ENCODE measurements at regions of chr1 and their contacts with region 1.

Region 1: DNA sequence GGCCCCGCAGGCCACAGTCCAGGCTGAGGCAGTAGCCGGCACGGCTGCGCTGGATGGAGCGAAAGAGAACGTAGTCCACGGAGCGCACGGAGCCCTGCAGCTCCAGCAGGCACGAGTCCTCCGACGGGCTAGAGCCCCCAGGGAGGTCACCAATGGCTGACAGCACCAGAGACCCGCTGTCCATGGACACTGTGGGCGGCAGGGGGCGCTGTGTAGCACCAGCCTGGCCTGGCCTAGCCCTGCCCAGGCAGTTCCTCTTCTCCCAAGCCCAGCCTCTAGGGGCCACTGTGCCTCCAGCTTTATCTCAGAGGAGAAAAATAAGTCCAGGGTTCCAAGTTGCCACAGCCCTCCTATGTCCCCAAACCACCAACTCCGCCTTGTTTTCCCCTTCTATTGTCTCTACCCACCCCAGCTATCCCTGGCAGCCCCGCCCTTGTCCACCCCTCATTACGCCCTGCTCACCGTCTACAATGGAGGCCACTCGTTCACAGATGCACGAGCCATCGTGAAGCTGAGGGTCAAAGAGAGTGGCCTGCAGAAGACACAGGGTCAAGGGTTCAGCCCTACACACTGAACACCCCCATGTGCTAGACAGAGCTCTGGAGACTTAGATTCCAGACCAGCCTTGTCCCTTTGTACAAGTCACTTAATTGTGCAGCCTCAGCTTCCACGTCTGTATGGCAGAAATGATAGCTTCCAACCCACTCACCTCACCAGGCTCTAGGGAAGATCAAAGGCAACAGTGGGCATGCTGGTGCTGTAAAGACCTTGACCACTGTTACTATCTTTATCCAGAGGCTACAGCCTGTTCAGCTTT is 4.4 kb downstream of the ENTREP3 start:
- DNase-seq: peak; percentile 89
- H3K4me3 ChIP-seq: peak overlapping the region in 1 of 3 experiments; percentile 12
- H3K27ac ChIP-seq: no peak overlapping the region
- H3K4me1 ChIP-seq: peaks cover 26% of the 10 kb centered on the region
- H3K27me3 ChIP-seq: no peaks in the 10 kb centered on the region
- CTCF ChIP-seq: peak; percentile 100
- POLR2A ChIP-seq: no peak

Region 2: DNA sequence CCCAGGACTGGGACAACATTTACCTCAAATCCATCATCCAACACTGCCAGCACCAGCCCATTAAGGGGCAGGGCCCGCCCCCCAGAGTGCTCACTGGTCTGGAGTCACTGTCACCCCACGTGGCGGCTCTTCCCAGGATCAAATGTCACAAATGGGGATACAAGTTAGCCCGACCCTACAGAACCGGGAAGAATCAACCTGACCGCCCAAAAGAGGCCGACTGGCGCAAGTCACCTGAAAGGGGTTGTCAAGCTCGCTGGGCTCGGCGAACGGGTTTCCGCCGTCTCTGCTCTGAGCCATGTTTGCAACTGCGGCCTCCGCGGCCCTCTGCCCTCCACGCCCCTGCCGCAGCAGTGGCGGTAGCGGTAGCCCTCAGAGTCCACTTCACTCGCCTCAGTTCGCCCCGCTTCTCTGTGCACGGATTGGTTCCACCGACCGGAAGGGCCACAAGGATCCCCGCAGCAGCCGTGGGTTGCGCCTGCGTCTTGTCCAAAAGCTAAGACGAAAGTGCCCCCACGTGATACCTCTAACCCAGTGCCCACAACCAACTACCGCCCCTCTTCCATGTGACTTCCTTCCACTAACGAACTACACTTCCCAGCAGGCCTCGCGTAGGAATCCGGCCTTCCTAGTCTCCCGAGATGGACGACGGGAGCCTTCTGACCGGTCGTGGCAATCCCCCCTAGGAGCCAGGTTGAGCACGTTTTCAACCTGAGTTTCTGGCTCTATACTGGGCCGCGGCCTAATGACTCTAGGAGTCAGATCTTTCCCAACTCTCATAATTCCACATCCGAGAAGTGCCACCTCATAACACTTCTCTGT is 11.2 kb after region 1 on chr1 and contains the start of gene SCAMP3:
- CTCF ChIA-PET with region 1: interaction called, 18 read pairs
- POLR2A ChIA-PET with region 1: no interaction called
- dilution Hi-C with region 1: no loop called
- intact Hi-C with region 1: no loop called
- DNase-seq: peak; percentile 99
- H3K4me3 ChIP-seq: peak within 1 kb of the TSS; percentile 51 to 74 (median 64)
- H3K27ac ChIP-seq: peak within 1 kb of the TSS; percentile 6
- H3K4me1 ChIP-seq: peaks cover 8% of the 10 kb centered on the region
- H3K27me3 ChIP-seq: no peaks in the 10 kb centered on the region
- CTCF ChIP-seq: no peak
- POLR2A ChIP-seq: peak; percentile 97
- total RNA-seq, gene SCAMP3: 80.1 and 80.8 TPM in 2 replicates

Region 3: GRCh38 chr1:155308493-155309422 is 57.9 kb after region 1 on chr1 and contains the start of gene FDPS:
- CTCF ChIA-PET with region 1: interaction called, 27 read pairs
- POLR2A ChIA-PET with region 1: no interaction called
- dilution Hi-C with region 1: no loop called
- intact Hi-C with region 1: loop called (anchors 1 kb)
- DNase-seq: peak; percentile 99
- H3K4me3 ChIP-seq: peak within 1 kb of the TSS; percentile 47 to 86 (median 84)
- H3K27ac ChIP-seq: peak within 1 kb of the TSS; percentile 88
- H3K4me1 ChIP-seq: peaks cover 24% of the 10 kb centered on the region
- H3K27me3 ChIP-seq: no peaks in the 10 kb centered on the region
- CTCF ChIP-seq: no peak
- POLR2A ChIP-seq: peak; percentile 87
- total RNA-seq, gene FDPS: 630 and 670 TPM in 2 replicates

Region 4: DNA sequence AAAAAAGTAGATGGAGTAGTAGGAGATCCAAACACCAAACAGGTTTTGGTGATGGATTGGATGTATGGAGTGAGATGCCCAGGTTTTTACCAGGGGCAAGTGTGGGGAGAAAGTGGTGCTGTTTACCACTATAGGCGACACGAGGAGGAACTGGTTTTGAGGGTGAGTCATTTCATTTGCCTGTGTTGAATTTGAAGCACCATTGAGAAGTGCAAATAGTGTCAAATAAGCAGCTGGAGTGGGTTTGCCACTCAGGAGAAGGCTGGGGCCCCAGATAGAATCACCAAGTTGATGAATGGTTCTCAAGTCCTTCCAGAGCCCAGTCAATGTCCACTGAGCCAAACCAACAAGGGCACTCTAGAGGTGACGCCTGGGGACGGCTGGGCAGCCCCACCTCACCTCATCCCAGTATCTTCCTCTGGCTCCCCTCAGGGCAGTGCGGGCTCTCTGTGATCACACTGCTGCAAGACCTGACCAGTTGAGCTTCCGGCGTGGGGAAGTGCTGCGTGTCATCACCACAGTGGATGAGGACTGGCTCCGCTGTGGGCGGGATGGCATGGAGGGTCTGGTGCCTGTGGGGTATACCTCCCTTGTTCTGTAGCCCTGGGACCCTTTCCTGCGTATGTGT is 79.2 kb after region 1 on chr1:
- CTCF ChIA-PET with region 1: interaction called, 115 read pairs
- POLR2A ChIA-PET with region 1: interaction called, 6 read pairs
- dilution Hi-C with region 1: no loop called
- intact Hi-C with region 1: no loop called
- DNase-seq: no peak
- H3K4me3 ChIP-seq: no peak overlapping the region
- H3K27ac ChIP-seq: no peak overlapping the region
- H3K4me1 ChIP-seq: peaks cover 7% of the 10 kb centered on the region
- H3K27me3 ChIP-seq: no peaks in the 10 kb centered on the region
- CTCF ChIP-seq: no peak
- POLR2A ChIP-seq: no peak

Region 5: DNA sequence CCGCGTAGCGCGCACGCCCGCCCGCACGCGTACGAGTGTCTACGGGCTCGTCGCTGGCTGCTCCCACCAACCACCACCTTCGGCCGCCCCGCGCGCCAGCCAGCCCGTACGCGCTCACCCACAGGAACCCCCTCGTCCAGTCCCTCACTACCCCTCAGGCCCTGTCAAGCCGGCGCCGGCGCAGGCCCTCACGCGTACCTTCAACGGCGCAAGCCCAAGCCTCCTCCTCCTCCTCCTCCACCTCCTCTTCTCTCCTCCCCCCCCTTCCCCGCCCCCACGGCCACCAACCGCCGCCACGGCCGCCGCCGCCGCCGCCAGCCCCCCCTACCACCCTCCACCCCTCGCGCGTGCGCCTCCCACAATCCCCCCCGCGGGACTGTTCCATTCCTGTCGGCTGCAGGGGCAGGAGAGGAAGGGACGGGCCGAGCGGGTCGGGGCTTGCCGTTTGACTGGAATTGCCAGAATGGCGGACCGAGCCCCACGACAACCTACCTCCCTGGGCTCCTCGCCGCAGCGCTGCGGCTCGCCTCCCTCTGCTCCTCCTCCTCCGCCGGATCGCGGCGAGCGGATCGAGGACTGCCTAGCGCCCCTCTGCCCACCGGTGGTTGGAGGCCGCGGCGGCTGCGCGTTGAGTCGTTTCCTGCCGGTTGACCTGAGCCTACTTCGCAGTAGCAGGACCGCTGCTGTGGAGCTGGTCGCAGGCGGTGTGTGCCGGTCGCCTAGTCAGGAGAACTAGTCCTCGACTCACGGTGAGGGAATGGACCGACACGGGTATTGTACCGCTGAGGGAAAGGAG is 311.9 kb after region 1 on chr1 and contains the start of gene ASH1L:
- CTCF ChIA-PET with region 1: interaction called, 5 read pairs
- POLR2A ChIA-PET with region 1: no interaction called
- dilution Hi-C with region 1: no loop called
- intact Hi-C with region 1: loop called (anchors 10 kb)
- DNase-seq: peak; percentile 95
- H3K4me3 ChIP-seq: peak within 1 kb of the TSS; percentile 63 to 92 (median 89)
- H3K27ac ChIP-seq: peak within 1 kb of the TSS; percentile 74
- H3K4me1 ChIP-seq: peaks cover 9% of the 10 kb centered on the region
- H3K27me3 ChIP-seq: no peaks in the 10 kb centered on the region
- CTCF ChIP-seq: no peak
- POLR2A ChIP-seq: peak; percentile 96
- total RNA-seq, gene ASH1L: 29.2 and 29.4 TPM in 2 replicates

Region 6: DNA sequence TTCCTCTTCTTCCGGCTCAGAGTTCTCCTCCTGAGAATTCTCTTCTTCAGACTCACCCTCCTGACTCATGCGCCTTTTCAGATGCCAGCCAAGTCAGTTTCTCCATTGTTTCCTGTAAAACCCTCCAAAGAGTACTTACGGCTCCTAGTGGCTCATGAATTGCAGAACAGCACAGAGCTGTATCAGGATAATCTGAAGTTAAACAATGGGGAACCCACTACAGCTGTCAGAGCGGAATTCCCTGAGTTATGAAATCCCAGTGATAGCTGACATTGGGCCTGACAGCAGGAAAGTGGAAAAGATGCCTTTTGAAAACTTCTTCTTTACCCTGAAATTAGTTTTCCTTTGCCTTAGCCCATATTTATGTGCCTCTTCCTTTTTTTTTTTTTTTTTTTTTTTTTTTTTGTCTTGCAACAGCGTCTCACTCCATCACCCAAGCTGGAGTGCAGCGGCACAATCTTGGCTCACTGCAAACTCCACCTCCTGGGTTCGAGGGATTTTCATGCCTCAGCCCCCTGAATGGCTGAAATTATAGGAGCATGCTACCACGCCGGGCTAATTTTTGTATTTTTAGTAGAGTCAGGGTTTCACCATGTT is 397.8 kb after region 1 on chr1:
- CTCF ChIA-PET with region 1: interaction called, 29 read pairs
- POLR2A ChIA-PET with region 1: no interaction called
- dilution Hi-C with region 1: no loop called
- intact Hi-C with region 1: loop called (anchors 1 kb)
- DNase-seq: peak; percentile 87
- H3K4me3 ChIP-seq: no peak overlapping the region
- H3K27ac ChIP-seq: no peak overlapping the region
- H3K4me1 ChIP-seq: peaks cover 7% of the 10 kb centered on the region
- H3K27me3 ChIP-seq: no peaks in the 10 kb centered on the region
- CTCF ChIP-seq: peak; percentile 44 to 53
- POLR2A ChIP-seq: no peak

Region 7: DNA sequence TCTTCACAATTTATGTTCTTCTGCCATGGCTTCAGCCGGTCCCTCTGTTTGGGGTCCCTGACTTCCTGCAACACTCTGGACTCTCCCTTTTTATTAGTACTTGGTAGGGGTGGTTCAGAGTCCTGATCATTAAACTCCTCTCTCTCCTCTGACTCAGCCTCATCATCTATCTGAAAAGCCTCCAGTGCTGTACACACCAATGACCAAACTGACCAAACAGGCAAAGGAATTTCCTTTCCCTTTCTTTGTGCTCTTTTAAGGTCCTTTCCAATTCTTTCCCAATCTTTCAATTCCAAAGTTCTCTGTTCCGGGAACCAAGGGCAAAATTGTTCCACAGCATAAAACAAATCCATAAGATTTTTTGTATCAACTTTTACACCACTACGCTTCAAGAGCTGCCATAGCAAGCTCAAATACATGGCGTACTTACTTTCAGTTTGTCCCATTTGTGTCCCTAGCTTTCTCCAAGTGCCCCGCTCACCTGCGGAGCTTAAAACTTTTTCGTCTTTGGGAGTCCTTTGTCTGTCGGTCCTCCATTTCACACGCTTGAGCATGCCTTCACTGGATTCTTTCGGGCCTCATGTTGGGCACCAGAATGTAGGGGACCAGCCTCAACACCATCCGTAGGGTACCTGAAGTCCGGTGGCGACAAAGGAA is 447.7 kb after region 1 on chr1:
- CTCF ChIA-PET with region 1: no interaction called
- POLR2A ChIA-PET with region 1: no interaction called
- dilution Hi-C with region 1: no loop called
- intact Hi-C with region 1: no loop called
- DNase-seq: no peak
- H3K4me3 ChIP-seq: no peak overlapping the region
- H3K27ac ChIP-seq: no peak overlapping the region
- H3K4me1 ChIP-seq: no peaks in the 10 kb centered on the region
- H3K27me3 ChIP-seq: no peaks in the 10 kb centered on the region
- CTCF ChIP-seq: no peak
- POLR2A ChIP-seq: no peak

Region 8: DNA sequence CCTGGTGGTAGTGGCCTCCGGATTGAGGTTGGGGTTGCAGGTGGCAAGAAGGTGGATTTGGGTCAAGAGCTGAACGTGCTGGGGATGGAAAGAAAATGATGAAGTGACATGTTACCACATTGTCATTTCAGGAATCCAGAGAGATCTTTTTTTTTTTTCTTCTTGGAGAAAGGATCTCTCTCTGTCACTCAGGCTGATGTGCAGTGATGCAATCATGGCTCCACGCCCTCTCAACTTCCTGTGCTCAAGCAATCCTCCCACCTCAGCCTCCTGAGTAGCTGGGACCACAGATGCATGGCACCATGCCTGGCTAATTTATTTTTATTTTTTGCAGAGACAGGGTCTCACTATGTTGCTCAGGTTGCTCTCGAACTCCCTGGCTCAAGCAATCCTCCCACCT is 525.6 kb after region 1 on chr1:
- CTCF ChIA-PET with region 1: no interaction called
- POLR2A ChIA-PET with region 1: no interaction called
- dilution Hi-C with region 1: no loop called
- intact Hi-C with region 1: no loop called
- DNase-seq: no peak
- H3K4me3 ChIP-seq: no peak overlapping the region
- H3K27ac ChIP-seq: no peak overlapping the region
- H3K4me1 ChIP-seq: no peaks in the 10 kb centered on the region
- H3K27me3 ChIP-seq: no peaks in the 10 kb centered on the region
- CTCF ChIP-seq: no peak
- POLR2A ChIP-seq: no peak